A673 (cell line): ENCODE measurements at regions of chr1 and their contacts with region 1.

Region 1: DNA sequence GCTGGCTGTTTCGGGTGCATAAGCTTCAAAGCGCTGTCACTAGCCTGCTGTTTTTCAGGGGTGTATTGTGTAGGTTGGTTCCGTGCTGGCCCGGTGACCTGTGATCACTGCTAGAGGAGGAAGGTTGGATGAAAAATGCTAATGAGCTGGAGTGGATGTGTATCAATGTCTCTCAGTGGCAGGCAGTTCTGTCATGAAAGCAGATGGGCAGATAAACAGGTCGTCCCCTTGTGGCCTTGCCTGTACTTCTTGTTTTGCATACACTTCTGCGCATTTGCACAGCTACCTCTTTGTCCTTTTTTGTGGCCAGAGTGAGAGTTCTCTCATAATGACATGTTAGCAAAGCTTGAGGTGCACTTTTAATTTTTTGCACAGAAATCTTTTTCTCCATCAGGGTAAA is 2.9 kb downstream of the SELENON start:
- DNase-seq: no peak
- H3K4me3 ChIP-seq: no peak overlapping the region
- H3K27ac ChIP-seq: no peak overlapping the region
- H3K4me1 ChIP-seq: peaks cover 6% of the 10 kb centered on the region
- H3K27me3 ChIP-seq: no peaks in the 10 kb centered on the region
- CTCF ChIP-seq: no peak

Region 2: GRCh38 chr1:25484096-25484495 is 318.8 kb before region 1 on chr1:
- CTCF ChIA-PET with region 1: no interaction called
- POLR2A ChIA-PET with region 1: no interaction called
- intact Hi-C with region 1: no loop called
- DNase-seq: no peak
- H3K4me3 ChIP-seq: no peak overlapping the region
- H3K27ac ChIP-seq: no peak overlapping the region
- H3K4me1 ChIP-seq: no peaks in the 10 kb centered on the region
- H3K27me3 ChIP-seq: no peaks in the 10 kb centered on the region
- CTCF ChIP-seq: no peak

Region 3: GRCh38 chr1:25608488-25609178 is 194.3 kb before region 1 on chr1:
- CTCF ChIA-PET with region 1: no interaction called
- POLR2A ChIA-PET with region 1: no interaction called
- intact Hi-C with region 1: loop called (anchors 2 kb)
- DNase-seq: peak; percentile 91
- H3K4me3 ChIP-seq: no peak overlapping the region
- H3K27ac ChIP-seq: no peak overlapping the region
- H3K4me1 ChIP-seq: no peaks in the 10 kb centered on the region
- H3K27me3 ChIP-seq: peaks cover 44% of the 10 kb centered on the region
- CTCF ChIP-seq: peak; percentile 63

Region 4: DNA sequence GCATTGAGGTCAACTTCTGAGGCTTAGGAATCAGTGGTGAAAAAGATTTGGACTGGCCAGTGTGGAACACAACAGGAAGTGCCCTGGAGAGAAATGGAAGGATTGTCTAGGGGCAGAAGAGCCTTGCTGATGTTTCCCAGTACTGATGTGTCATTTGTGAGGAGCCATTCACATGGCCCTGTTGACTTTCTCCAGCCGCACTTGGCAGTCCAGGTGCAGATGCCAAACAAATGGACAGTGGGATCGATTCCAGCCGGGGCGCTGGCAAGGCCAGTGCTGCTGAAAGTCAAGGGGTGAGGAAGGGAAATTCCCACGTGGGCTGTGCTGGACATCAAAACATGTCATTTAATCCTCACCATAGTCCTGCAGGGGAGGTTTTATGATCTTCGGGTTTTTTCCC is 269.4 kb after region 1 on chr1:
- CTCF ChIA-PET with region 1: no interaction called
- POLR2A ChIA-PET with region 1: no interaction called
- intact Hi-C with region 1: no loop called
- DNase-seq: no peak
- H3K4me3 ChIP-seq: no peak overlapping the region
- H3K27ac ChIP-seq: no peak overlapping the region
- H3K4me1 ChIP-seq: no peaks in the 10 kb centered on the region
- H3K27me3 ChIP-seq: peaks cover 33% of the 10 kb centered on the region
- CTCF ChIP-seq: no peak